Cardiac septum (tissue), 1 donor: ENCODE measurements at regions of chr9 and their contacts with region 1.

Region 1: DNA sequence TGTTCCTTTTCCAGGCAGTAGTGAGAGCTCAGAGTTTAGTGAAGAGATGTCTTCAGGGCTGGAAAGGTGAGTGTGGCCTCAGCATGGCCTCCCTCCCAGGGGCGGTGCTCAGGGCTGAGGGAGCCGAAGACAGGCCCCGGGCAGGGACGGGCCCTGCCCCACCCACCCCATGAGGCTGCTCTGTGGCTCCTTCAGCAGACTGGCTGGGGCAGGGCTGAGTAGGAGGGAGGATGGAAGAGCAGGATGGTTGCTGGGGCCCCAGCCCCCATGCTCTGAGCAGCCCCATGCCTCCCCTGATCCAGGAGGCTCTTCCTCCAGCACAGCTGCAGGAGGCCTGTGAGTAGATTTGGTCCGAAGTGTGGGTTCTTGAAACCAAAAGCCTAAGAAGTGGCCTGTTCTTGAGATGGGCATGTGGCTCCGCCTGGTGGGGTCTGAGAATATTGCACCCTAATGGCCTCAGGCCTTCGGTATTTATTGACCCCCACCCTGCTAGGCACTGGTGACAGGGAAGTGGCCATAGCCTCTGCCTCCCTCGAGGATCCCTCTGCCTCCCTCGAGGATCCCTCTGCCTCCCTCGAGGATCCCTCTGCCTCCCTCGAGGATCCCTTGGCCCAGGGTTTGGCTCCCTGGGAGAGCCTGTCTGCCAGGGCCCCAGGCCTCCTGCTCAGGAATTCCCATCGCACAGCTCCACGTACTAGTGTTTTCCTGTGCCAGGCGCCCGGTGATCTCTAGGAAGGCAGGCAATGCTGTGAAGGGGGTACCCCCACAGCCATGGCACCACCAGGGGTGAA is 65.4 kb upstream of the GARNL3 start:
- DNase-seq: no peak

Region 2: GRCh38 chr9:126939821-126940221 is 259.4 kb before region 1 on chr9:
- intact Hi-C with region 1: loop called (anchors 1 kb)
- DNase-seq: no peak

Region 3: GRCh38 chr9:126965541-126966428 is 233.4 kb before region 1 on chr9:
- intact Hi-C with region 1: loop called (anchors 2 kb)
- DNase-seq: no peak

Region 4: GRCh38 chr9:127112056-127112455 is 87.1 kb before region 1 on chr9:
- intact Hi-C with region 1: no loop called
- DNase-seq: peak; percentile 81